Vagina (tissue), 2 donors: ENCODE measurements at regions of chr4 and their contacts with region 1.

Region 1: DNA sequence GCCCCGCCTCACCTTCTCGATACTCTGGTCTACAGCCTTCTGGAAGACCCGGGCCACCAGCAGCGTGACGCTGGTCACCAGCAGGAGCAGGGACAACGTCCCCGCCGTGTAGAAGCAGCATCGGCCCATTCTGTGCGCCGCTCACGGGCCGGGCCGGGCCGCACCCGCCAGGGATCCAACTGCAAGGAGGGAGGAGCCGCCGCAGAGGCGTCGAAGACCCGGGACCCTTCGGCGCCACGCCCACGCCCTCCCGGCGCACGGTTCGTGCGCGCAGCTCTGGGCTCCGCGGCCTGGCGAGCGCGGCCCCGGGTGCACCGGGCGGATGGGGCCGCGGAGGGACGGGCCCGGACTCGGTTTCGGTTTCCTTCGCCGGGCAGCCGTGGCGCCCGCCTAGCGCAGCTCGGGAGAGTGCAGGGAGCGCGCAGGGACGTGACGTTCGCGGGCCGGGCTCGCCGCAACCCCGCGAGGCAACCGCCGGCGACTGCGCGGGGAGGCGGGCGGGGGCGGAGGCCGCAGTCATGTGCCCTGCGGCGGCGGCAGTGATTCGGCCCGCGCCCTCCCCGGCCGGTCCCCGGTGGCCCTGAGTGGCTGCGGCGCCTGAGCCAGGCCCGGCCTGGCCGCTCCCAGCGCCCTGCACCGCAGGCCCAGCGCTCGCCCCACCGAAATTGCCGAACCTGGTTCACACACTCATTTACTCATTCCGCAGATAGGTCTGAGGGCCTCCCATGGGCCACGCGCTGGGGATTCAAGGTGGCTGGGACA is at the start of gene SCARB2:
- DNase-seq: no peak
- H3K4me3 ChIP-seq: peak within 1 kb of the TSS; percentile 69 to 84
- H3K27ac ChIP-seq: peak within 1 kb of the TSS; percentile 95
- H3K4me1 ChIP-seq: peaks cover 57% of the 10 kb centered on the region
- H3K27me3 ChIP-seq: no peaks in the 10 kb centered on the region
- CTCF ChIP-seq: no peak
- POLR2A ChIP-seq: peak; percentile 17 to 92
- total RNA-seq, gene SCARB2: 156 TPM

Region 2: DNA sequence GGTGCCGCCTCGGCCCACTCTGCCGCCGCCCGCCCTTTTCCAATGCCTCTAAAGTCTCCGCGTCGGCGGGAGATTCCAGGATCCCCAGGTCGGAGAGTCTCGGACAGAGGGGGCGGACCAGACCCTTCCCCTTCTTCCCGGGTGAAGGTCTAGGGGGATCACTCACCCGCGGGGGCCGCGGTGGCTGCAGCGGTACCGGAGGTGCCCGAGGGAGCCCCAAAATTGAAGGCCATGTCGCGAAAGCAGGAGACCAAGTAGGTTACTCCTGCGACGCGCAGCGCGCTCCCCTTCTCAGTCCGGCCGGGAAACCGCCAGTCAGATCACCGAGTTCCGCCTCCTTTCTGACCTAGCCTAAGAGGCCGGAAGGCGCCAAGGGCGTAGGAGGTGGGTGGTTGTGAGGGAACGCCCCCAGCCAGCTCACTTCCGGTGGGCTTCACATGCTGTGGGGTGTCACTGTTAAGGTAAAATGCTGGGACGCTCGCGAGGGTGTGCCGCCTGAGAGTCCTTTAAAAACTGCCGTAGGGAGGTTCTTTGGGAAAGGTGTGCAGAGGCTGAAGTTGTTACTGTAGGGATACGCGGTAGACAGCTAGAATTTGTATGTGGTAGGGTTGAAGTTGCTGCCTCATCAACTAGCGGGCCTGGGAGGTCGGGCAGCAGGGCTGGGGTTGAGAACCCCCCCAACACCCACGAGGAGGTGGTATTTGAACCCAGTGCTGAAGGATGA is 65.3 kb before region 1 on chr4 and contains the start of gene NUP54:
- intact Hi-C with region 1: loop called (anchors 5 kb)
- DNase-seq: peak in 1 of 2 donors; percentile 95
- H3K4me3 ChIP-seq: peak within 1 kb of the TSS; percentile 81 to 99
- H3K27ac ChIP-seq: peak within 1 kb of the TSS; percentile 93
- H3K4me1 ChIP-seq: peaks cover 36% of the 10 kb centered on the region
- H3K27me3 ChIP-seq: no peaks in the 10 kb centered on the region
- CTCF ChIP-seq: no peak
- POLR2A ChIP-seq: peak in 1 of 2 donors; percentile 65
- total RNA-seq, gene NUP54: 31.2 TPM

Region 3: DNA sequence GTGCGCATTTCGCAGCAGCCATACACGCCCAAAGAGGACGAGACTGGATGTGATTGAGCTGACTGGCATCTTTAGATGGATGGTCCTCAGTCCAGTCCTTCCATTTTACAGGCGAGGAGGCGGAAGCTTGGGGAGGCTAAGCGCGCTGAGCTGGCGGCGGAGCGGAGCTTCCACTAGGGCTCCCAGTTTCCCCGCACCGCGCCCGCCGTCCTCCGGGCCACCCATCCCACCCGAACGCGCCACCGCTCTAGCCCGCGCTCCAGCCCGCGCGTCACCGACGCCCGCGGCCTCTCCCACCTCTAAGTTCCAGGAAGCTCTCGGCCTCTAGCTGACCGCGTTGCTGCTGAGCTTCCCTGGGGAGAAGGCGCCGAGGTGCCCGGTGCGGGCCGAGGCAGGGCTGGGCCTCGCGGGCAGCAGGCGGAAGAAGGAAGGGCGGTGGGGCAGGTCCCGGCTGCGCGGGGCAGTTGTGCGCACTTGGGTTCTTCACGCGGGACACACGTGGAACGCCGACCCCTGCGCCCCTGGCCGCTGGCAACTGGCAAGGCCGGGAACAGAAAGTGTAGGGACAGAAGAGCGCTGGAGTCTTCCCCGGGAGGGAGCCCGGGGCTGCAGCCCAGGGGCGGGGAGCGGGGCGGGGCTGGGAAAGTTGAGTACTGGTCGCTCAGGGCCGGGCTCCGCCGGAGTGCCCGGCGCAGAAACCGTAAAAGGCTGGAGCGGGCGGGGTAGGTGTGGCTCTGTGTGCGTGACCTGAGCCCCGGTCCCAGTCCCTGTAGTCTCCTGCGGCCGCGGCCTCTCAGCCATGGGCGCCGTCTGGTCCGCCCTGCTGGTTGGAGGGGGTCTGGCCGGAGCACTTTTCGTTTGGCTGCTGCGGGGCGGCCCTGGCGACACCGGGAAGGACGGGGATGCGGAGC is 92.6 kb after region 1 on chr4 and contains the start of gene STBD1:
- intact Hi-C with region 1: loop called (anchors 10 kb)
- DNase-seq: no peak
- H3K4me3 ChIP-seq: peak within 1 kb of the TSS; percentile 75 to 85
- H3K27ac ChIP-seq: peak within 1 kb of the TSS; percentile 94
- H3K4me1 ChIP-seq: peaks cover 41% of the 10 kb centered on the region
- H3K27me3 ChIP-seq: no peaks in the 10 kb centered on the region
- CTCF ChIP-seq: no peak
- POLR2A ChIP-seq: peak in 1 of 2 donors; percentile 29
- total RNA-seq, gene STBD1: 7.6 TPM

Region 4: GRCh38 chr4:76748649-76749048 is 535.1 kb after region 1 on chr4:
- intact Hi-C with region 1: loop called (anchors 10 kb)
- DNase-seq: no peak
- H3K4me3 ChIP-seq: no peak overlapping the region
- H3K27ac ChIP-seq: no peak overlapping the region
- H3K4me1 ChIP-seq: peaks cover 14% of the 10 kb centered on the region
- H3K27me3 ChIP-seq: no peaks in the 10 kb centered on the region
- CTCF ChIP-seq: no peak
- POLR2A ChIP-seq: no peak